ENCODE measurements at regions of chr4 and their contacts with region 1.

Region 1: GRCh38 chr4:121096629-121097028 is 24.3 kb upstream of the NDNF start:
- DNase-seq: no peak
- ATAC-seq: no peak

Region 2: DNA sequence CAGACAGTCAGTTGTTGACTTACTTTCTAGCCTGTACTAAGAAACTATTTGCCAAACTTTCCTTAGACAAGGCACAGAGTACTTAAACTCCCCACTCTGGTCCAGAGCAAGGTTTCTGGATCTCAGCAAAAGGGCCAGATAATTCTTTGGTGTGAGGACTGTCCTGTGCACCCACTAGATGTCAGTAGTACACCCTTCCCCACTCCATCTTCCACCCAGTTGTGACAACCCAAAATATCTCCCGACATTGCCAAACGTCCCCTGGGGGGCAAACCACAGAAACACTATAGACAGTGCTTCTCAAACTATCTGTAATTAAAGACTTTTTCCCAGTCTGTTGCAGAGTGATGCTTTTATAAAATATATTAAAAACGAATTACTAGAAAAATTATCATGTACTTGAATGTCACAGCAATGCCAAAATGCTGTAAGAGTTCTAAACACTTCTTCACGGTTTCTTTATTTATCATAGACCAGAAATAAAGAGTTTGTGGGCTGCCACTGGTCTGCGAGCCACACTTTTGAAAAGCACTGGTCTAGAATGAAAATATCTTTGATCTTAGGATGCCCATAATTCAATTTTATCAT is 377.6 kb before region 1 on chr4:
- intact Hi-C with region 1: loop called (anchors 5 kb)
- DNase-seq: no peak
- ATAC-seq: peak; percentile 90

Region 3: GRCh38 chr4:121025540-121025939 is 71.1 kb before region 1 on chr4:
- intact Hi-C with region 1: no loop called
- DNase-seq: no peak
- ATAC-seq: no peak

Measured in left ventricle myocardium superior (tissue), 1 donor.